ENCODE measurements at regions of chr5 and their contacts with region 1.

Region 1: DNA sequence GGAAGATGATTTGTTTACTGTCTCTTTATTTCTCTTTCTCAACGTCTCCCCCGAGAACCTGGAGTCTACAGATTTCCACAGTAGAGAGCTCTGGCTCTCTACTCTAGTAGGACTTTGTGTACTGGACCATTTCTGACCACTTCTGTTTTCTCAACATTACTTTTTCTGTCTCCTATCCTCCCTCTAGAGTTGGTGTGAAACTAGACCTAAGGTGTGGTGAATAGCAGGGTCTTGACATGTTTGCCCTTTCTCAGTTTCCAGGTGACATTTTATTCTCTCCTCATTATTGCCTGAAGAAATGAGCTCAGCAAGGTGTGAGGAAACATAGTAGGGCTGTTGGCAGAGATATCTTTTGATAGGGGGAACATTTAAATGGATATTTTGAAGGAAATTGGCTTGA is 62.1 kb upstream of the IL6ST start:
- DNase-seq: no peak
- H3K4me3 Mint-ChIP-seq: no peak overlapping the region
- H3K27ac Mint-ChIP-seq: peak overlapping the region; percentile 4
- H3K4me1 Mint-ChIP-seq: peaks cover 61% of the 10 kb centered on the region
- H3K27me3 Mint-ChIP-seq: peaks cover 1% of the 10 kb centered on the region

Region 2: GRCh38 chr5:55711968-55712859 is 344.7 kb before region 1 on chr5 and contains the start of gene SLC38A9:
- CTCF ChIA-PET with region 1: no interaction called
- POLR2A ChIA-PET with region 1: no interaction called
- intact Hi-C with region 1: no loop called
- DNase-seq: peak; percentile 96
- H3K4me3 Mint-ChIP-seq: peak within 1 kb of the TSS; percentile 96
- H3K27ac Mint-ChIP-seq: peak within 1 kb of the TSS; percentile 80
- H3K4me1 Mint-ChIP-seq: peaks cover 33% of the 10 kb centered on the region
- H3K27me3 Mint-ChIP-seq: no peaks in the 10 kb centered on the region
- total RNA-seq, gene SLC38A9: 14.2 to 15.0 TPM

Region 3: GRCh38 chr5:56012281-56012963 is 44.5 kb before region 1 on chr5:
- CTCF ChIA-PET with region 1: interaction called, 5 read pairs
- POLR2A ChIA-PET with region 1: no interaction called
- intact Hi-C with region 1: loop called (anchors 1 kb)
- DNase-seq: peak; percentile 61
- H3K4me3 Mint-ChIP-seq: peak overlapping the region; percentile 31
- H3K27ac Mint-ChIP-seq: peak overlapping the region; percentile 81
- H3K4me1 Mint-ChIP-seq: peaks cover 30% of the 10 kb centered on the region
- H3K27me3 Mint-ChIP-seq: no peaks in the 10 kb centered on the region

Region 4: DNA sequence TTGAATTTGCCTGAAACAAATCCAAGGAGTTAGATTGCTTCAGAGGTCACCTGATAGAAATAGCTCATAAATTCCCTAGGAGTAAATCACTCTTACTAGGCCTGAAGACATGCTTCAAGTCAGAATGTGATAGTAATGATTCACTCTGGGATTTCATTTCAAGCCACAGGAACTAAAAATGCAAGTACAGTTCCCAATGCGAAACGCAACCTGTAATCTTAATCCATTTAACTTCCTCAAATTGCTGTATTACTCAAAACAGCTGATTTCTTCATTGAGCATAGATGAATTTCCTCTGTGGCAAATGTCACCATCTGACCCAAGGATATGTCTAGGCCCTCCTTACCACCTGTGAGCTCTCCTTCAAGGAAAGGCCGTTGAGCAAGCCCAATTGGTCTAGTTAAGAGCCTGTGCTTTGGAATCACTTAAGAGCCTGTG is 30.0 kb before region 1 on chr5:
- CTCF ChIA-PET with region 1: no interaction called
- POLR2A ChIA-PET with region 1: interaction called, 4 read pairs
- intact Hi-C with region 1: loop called (anchors 2 kb)
- DNase-seq: peak; percentile 11
- H3K4me3 Mint-ChIP-seq: no peak overlapping the region
- H3K27ac Mint-ChIP-seq: no peak overlapping the region
- H3K4me1 Mint-ChIP-seq: peaks cover 4% of the 10 kb centered on the region
- H3K27me3 Mint-ChIP-seq: no peaks in the 10 kb centered on the region

Region 5: DNA sequence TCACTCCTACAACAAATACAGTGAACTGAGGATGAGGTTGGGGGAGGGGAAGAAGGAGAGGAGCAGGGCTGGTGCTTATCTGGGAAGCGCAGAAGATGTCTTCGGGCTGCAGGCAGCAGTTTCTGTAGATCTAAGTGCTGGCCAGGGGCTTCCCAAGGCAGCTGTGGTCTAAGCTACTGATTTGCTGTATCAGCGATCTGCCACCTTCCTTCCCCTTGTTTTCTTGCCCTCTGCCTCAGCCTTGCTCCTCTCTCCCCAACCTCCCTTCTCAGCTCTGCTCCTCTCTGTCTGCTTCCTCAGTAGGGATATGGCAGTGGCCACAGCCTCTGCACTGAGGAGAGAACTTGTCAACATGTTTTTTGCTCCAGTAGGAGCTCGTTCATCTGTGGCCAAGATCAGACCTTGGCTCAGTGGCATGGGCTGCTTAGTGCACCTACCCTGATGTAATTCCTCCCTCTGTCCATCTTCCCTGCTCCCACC is 19.3 kb before region 1 on chr5:
- CTCF ChIA-PET with region 1: no interaction called
- POLR2A ChIA-PET with region 1: no interaction called
- intact Hi-C with region 1: no loop called
- DNase-seq: no peak
- H3K4me3 Mint-ChIP-seq: no peak overlapping the region
- H3K27ac Mint-ChIP-seq: no peak overlapping the region
- H3K4me1 Mint-ChIP-seq: peaks cover 8% of the 10 kb centered on the region
- H3K27me3 Mint-ChIP-seq: no peaks in the 10 kb centered on the region

Region 6: DNA sequence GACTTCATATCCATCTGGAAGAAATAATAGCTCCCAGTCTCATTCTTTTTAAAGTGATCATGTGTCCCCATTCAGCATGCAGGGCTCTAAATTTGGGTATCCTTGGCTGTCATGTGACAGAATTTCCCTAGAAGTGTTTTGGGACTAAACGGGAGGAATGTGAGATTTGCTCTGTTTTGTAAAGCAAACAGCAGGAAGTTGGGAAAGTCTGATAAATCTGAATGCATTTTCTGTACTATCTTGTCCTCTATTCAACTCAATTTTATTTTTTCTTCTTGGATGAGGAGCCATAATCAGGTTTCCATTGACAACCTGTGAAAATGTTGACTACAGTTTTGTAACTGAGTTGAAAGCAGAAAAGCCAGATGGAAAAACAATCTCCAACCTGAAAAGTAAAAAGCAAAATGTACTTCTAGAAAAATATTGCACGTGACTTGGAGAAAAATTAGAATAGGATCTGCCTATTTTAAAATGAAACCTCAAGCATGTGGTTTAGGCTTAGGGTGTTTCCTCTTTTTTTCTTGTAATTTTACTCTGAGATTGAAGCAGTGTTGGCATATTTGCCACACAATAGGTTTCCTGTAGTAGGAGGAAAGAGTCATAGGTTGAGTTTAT is 14.1 kb after region 1 on chr5:
- CTCF ChIA-PET with region 1: no interaction called
- POLR2A ChIA-PET with region 1: no interaction called
- intact Hi-C with region 1: loop called (anchors 1 kb)
- DNase-seq: no peak
- H3K4me3 Mint-ChIP-seq: no peak overlapping the region
- H3K27ac Mint-ChIP-seq: peak overlapping the region; percentile 50
- H3K4me1 Mint-ChIP-seq: peaks cover 55% of the 10 kb centered on the region
- H3K27me3 Mint-ChIP-seq: no peaks in the 10 kb centered on the region

Region 7: DNA sequence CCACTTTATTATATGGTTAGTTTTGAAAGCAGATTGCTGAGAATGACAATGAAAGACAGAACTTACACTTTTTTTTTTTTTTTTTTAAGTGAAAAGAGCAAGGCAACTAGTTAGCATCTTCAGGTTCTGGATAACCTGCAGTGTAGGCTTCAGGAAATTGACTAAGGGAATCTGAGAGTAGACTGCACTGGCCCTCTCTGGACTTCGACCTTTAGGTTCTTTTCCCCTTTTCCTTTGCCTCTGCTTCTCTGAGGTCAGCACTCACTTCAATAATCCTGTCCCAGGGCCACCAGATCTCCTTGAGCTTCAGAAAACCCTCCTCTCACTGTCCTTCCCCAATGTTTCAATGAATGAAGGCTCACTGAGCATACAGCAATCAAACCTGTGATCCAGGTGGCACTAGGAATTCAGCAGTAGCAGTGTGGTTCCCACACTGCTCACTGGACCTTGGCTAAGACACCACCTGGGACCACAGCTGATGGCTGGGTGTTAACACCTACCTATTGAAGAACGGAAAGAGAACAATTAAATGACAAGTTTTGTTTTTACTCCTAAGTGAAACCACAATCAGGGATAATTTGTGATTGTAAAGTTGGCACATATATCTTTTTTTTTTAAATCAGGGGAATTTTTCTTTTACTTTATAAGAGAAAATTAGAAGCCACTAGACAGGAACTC is 23.6 kb after region 1 on chr5:
- CTCF ChIA-PET with region 1: no interaction called
- POLR2A ChIA-PET with region 1: interaction called, 6 read pairs
- intact Hi-C with region 1: loop called (anchors 1 kb)
- DNase-seq: peak; percentile 50
- H3K4me3 Mint-ChIP-seq: peak overlapping the region; percentile 2
- H3K27ac Mint-ChIP-seq: peak overlapping the region; percentile 71
- H3K4me1 Mint-ChIP-seq: peaks cover 47% of the 10 kb centered on the region
- H3K27me3 Mint-ChIP-seq: no peaks in the 10 kb centered on the region

Region 8: DNA sequence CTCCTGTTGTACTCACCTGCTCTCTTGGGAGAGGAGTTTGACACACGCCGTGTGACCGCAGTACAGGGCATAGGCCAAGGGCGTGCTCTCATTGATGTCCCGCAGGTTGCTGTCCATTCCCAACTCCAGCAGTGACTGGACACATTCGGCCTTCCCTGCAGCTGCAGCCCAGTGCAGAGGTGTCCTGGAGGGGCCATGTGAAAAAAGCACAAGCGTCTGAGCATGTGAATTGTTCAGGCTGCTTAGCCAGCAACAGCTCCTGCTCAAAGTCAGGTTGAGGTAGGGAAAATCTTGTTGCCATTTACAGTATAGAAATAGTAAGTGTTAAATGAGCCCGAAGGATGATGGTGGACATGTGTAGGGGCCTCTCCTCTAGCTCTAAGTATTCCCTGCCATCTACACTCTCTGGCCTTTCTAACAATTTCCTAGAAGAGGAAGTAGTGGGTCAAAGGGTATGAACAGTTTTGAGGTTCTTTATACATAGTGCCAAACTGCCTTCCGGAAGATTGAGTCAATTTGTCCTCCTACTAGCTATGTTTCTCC is 59.8 kb after region 1 on chr5:
- CTCF ChIA-PET with region 1: no interaction called
- POLR2A ChIA-PET with region 1: no interaction called
- intact Hi-C with region 1: no loop called
- DNase-seq: no peak
- H3K4me3 Mint-ChIP-seq: no peak overlapping the region
- H3K27ac Mint-ChIP-seq: no peak overlapping the region
- H3K4me1 Mint-ChIP-seq: peaks cover 2% of the 10 kb centered on the region
- H3K27me3 Mint-ChIP-seq: no peaks in the 10 kb centered on the region